Motor neuron (in vitro differentiated cells): ENCODE measurements at regions of chr9 and their contacts with region 1.

Region 1: GRCh38 chr9:88041447-88041846 is 67.1 kb upstream of the CDK20 start:
- ATAC-seq: peak in 3 of 8 experiments; percentile 41 to 70 (median 65)
- H3K4me3 ChIP-seq: no peak overlapping the region
- H3K27ac ChIP-seq: no peak overlapping the region
- H3K4me1 ChIP-seq: no peaks in the 10 kb centered on the region

Region 2: DNA sequence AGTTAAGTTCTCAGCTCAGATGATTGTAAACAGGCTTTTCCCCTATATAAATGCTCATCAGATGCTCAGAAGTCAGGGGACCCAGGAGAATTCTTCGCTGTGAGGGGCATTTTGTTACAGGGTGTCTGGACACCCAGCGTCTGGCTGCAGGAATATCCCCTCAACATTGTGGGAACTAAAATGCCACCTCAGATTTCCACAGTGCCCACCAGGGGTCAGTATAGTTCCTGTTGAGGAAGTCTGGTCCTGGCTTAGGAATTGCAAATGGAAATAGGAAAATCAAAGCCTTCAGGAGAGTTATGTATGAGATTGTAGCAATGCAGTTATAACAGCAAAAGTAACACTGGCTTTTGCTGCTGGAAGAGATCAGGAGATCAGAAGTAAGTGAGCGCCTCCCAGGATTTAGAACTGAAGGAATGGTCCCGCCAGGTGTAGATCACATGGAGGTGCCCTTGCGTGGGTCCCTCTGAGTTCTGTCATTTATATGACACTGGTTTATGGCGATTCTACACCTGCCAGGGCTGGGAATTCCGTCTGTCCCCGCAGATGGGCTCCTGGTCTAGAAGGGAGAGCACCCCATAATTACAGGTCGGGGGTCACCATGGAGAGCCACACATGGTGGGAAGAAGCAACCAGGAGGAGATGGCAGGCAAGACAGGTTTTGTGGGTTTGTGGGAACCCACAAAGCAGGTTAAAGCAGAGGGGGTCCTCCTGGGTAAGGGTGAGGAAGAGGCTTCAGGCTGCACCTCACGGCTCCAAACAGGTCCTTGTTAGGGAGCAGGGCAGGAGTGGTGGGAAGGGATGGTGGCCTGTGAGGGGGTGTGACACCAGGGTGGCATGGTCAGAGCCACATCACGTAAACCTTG is 362.6 kb before region 1 on chr9:
- in situ Hi-C with region 1: loop called in 2 of 9 experiments (anchors 25 kb)
- ATAC-seq: peak; percentile 52 to 75 (median 72)
- H3K4me3 ChIP-seq: no peak overlapping the region
- H3K27ac ChIP-seq: no peak overlapping the region
- H3K4me1 ChIP-seq: peaks cover 3 to 6% of the 10 kb centered on the region in 2 donors

Region 3: DNA sequence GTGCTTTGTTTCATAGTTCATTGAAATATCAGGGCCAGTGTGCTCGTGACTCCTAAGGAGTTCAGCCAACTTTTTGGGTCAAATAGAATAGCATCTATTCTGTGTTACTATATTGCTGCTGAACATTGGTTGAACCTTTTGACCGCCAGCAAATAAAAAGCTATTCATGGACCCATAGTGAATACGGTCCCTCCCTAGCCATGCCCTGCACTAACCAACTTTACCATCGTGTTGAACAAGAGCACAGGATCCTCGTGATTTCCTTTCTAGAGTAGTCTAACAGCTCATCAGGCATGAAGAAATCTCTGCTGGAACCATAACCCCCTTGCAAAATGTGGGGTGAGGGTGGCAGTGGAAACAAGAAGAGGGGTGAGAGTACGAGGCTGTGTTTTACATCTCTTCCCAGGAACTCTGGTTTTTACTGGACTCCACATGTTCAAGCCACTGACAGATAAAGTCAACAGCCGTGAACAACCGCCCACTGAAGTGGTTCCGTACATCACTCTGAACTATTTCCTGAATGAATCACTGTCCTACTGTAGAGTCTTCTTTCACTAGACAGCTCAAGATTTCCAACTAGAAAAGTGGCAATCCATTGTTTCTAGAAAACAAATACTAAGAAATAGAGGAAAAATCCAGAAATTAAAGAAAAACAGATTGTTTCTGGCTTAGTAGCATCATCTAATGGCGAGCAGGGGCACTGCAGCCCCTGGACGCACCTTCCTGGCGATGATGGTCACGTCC is 228.9 kb before region 1 on chr9:
- in situ Hi-C with region 1: loop called in 1 of 9 experiments (anchors 25 kb)
- ATAC-seq: peak in 3 of 8 experiments; percentile 79 to 83 (median 81)
- H3K4me3 ChIP-seq: no peak overlapping the region
- H3K27ac ChIP-seq: no peak overlapping the region
- H3K4me1 ChIP-seq: no peaks in the 10 kb centered on the region

Region 4: GRCh38 chr9:87950765-87951488 is 90.5 kb before region 1 on chr9:
- in situ Hi-C with region 1: loop called in 1 of 9 experiments (anchors 5 kb)
- ATAC-seq: peak in 4 of 8 experiments; percentile 14 to 68 (median 43)
- H3K4me3 ChIP-seq: no peak overlapping the region
- H3K27ac ChIP-seq: no peak overlapping the region
- H3K4me1 ChIP-seq: no peaks in the 10 kb centered on the region

Region 5: DNA sequence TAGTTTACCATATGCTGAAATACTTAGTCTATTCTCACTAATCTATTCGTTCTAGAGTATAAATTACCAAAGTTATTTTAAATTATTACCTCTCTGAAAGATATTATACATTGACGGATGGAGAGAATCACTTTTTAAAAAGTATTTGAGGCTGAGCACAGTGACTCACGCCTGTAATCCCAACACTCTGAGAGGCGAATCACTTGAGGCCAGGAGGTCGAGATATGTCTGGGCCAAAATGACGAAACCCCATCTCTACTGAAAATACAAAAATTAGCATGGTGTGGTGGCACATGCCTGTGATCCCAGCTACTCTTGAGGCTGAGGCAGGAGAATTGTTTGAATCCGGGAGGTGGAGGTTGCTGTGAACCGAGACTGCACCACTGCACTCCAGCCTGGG is 160.9 kb after region 1 on chr9:
- in situ Hi-C with region 1: no loop called
- ATAC-seq: no peak
- H3K4me3 ChIP-seq: no peak overlapping the region
- H3K27ac ChIP-seq: no peak overlapping the region
- H3K4me1 ChIP-seq: peaks cover 9 to 10% of the 10 kb centered on the region in 2 donors